Caco-2 (cell line): ENCODE measurements at regions of chr9 and their contacts with region 1.

Region 1: GRCh38 chr9:126334721-126335621 is 8.3 kb downstream of the MVB12B start:
- DNase-seq: peak; percentile 84 to 87
- H3K4me3 ChIP-seq: peak overlapping the region; percentile 21
- H3K4me3 Mint-ChIP-seq: peak overlapping the region; percentile 62
- H3K27ac Mint-ChIP-seq: peak overlapping the region; percentile 86
- H3K4me1 ChIP-seq: peaks cover 43% of the 10 kb centered on the region
- H3K4me1 Mint-ChIP-seq: peaks cover 24% of the 10 kb centered on the region
- H3K27me3 ChIP-seq: no peaks in the 10 kb centered on the region
- H3K27me3 Mint-ChIP-seq: no peaks in the 10 kb centered on the region
- CTCF ChIP-seq: no peak

Region 2: DNA sequence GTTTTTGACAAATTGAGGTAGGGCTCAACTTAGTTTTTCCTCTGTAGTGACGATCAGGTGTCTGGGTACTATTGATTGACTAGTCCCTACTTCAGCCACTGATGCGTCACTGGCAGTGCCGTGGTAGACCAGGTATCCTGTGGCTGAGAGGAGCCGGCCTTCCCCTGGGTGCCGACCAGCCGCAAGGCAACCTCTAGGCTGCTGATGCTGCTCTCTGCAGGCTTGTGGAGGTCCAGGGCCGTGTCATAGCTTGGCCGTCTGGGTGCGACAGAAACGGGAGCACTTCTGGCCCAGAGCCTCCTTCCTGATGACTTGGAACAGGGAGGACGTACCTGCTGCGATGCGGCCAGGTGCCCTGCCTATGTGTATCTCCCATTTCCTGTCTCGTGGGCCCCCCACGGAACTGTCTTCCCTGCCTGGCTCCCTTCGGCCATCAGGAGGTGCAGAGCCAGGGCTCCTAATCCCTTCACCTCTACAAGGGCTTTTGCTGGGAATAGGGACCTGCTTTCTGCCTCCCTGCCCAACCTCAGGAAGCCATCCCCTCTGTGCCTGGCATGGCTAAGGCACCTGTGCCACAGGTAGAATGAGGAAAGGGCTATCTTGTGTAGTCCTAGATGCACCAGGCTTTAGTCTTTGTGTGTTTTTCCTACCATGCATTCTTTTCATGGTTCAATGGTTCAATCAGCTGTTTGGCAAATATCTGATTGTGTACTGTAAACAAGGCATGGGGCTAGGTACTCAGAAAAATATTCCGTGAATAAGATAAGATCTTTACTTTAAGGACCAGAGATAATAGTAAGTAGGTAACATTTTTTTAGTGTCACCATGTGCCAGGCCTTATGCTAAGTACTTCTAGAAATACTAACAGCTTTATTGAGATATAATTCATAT is 36.3 kb after region 1 on chr9:
- CTCF ChIA-PET with region 1: no interaction called
- POLR2A ChIA-PET with region 1: no interaction called
- intact Hi-C with region 1: loop called (anchors 1 kb)
- DNase-seq: no peak
- H3K4me3 ChIP-seq: no peak overlapping the region
- H3K4me3 Mint-ChIP-seq: no peak overlapping the region
- H3K27ac Mint-ChIP-seq: peak overlapping the region; percentile 17
- H3K4me1 ChIP-seq: peaks cover 58% of the 10 kb centered on the region
- H3K4me1 Mint-ChIP-seq: peaks cover 60% of the 10 kb centered on the region
- H3K27me3 ChIP-seq: no peaks in the 10 kb centered on the region
- H3K27me3 Mint-ChIP-seq: no peaks in the 10 kb centered on the region
- CTCF ChIP-seq: no peak

Region 3: DNA sequence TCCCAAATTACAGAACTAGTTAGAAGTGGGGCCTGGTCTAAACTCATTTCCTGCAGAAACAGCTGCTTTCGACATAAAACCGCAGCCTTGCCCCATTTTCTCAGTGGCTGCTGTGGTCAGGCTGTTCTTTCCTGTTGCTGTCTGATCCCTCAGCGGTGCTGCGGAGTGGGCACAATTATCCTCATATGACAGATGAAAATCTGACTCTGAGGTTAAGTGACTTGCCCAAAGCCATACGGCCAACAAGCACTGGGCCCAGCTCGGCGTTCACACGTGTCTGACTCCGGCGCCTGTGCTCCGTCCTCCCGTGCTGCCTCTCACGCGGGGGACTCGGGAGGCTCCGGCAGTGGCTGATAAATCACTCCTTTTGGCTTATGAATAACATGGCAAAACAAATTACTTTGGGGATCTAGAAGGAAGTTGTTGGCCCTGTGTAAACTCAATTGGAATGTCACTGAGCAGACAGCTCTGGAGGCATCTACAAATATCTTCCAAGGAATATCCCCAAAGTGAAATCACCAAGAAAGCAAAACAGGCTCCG is 136.2 kb after region 1 on chr9:
- CTCF ChIA-PET with region 1: no interaction called
- POLR2A ChIA-PET with region 1: no interaction called
- intact Hi-C with region 1: no loop called
- DNase-seq: no peak
- H3K4me3 ChIP-seq: no peak overlapping the region
- H3K4me3 Mint-ChIP-seq: no peak overlapping the region
- H3K27ac Mint-ChIP-seq: no peak overlapping the region
- H3K4me1 ChIP-seq: no peaks in the 10 kb centered on the region
- H3K4me1 Mint-ChIP-seq: peaks cover 7% of the 10 kb centered on the region
- H3K27me3 ChIP-seq: no peaks in the 10 kb centered on the region
- H3K27me3 Mint-ChIP-seq: no peaks in the 10 kb centered on the region
- CTCF ChIP-seq: no peak